ENCODE measurements at regions of chr11 and their contacts with region 1.

Region 1: GRCh38 chr11:7833527-7833926 is 36.8 kb upstream of the OR5P2 start:
- DNase-seq: no peak
- H3K4me3 ChIP-seq: no peak overlapping the region
- CTCF ChIP-seq: no peak

Region 2: GRCh38 chr11:7904914-7905313 is 71.4 kb after region 1 on chr11:
- in situ Hi-C with region 1: loop called (anchors 5 kb)
- DNase-seq: no peak
- H3K4me3 ChIP-seq: no peak overlapping the region
- CTCF ChIP-seq: no peak

Measured in astrocyte of the cerebellum (primary cell).